Dorsolateral prefrontal cortex (tissue), 120 donors: ENCODE measurements at regions of chr19 and their contacts with region 1.

Region 1: GRCh38 chr19:5048091-5048726 is 79.3 kb downstream of the KDM4B start:
- DNase-seq: peak; percentile 75 to 90 (median 82)
- H3K4me3 ChIP-seq: peak overlapping the region in 8 of 59 donors; percentile 2 to 22 (median 9)
- H3K27ac ChIP-seq: peak overlapping the region in 53 of 59 donors; percentile 7 to 90 (median 70)
- H3K27me3 ChIP-seq: no peaks in the 10 kb centered on the region
- CTCF ChIP-seq: peak; percentile 85 to 99 (median 97)

Region 2: DNA sequence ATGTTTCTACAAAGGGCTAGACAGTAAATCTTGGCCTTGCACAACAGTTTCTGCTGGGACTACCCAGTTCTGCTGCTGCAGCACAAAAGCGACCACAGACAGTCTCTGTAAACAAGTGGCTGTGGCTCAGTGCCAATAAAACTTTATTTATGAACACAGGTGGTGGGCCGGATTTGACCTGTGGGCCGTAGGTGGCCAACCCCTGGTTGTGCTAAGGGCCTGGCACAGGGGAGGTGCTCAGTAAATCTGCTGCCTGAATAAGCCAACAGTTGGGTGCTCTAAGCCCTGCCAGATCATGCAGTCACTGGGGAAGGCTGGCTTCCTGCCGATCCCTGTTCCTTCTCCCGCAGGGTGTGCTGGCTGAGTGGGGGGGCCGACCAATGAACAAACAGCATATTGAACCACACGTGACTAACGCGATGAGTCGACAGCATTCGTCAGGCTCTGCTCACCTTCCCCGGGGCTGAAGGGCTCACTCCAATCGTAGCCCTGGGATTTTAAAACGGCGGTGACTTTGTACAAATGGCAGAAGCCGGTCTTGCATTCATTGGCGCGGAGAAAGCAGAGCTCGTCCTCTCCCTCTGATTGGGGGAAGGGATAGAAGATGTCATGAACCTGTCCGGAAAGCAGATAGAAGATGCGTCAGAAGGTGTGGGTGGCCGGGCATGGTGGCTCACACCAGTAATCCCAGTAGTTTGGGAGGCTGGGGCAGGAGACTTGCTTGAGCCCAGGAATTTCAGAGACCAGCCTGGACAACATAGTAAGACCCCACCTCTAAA is 353.8 kb before region 1 on chr19:
- intact Hi-C with region 1: no loop called
- DNase-seq: peak; percentile 57 to 82 (median 74)
- H3K4me3 ChIP-seq: peak overlapping the region in 3 of 59 donors; percentile 1 to 22 (median 8)
- H3K27ac ChIP-seq: peak overlapping the region in 57 of 59 donors; percentile 32 to 93 (median 75)
- H3K27me3 ChIP-seq: no peaks in the 10 kb centered on the region
- CTCF ChIP-seq: no peak

Region 3: DNA sequence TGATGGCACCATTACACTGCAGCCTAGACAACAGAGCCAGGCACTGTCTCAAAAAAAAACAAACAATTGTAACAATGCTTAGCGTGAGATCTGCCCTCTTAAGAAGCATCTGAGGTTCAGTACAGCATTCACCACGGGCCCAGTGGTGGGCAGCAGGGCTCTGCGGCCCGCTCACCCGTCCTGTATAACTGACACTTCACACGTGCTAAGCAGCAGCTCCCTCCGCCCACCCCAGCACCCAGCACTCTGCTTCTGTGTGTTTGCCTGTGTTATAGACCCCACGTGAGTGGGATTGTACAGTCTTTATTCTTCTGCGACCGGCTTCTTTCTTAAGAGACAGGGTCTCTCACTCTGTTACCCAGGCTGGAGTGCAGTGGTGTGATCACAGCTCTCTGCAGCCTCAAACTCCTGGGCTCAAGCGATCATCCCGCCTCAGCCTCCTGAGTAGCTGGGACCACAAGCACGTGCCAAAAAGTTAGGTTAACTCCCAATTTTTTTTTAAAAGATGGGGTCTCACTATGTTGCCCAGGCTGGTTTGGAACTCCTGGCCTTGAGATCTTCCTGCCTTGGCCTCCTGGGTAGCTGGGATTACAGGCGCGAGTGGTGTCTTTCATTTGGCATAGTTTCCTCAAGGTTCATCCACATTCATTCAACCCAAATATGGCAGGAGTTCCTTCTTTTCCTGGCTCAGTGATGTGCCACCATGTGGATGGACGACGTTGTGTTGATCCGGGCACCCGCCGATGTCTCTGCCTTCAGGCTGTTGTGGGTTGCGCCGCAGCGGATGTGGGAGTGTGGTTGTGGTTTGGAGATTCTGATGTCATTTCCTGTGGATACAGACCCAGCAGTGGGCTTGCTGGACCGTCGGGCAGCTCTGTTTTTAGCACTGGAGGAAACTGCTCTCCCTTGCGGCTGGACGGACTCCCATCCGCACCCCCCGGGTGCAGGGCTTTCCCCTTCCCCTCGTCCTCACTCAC is 90.7 kb after region 1 on chr19:
- intact Hi-C with region 1: loop called (anchors 2 to 5 kb)
- DNase-seq: peak in 4 of 10 donors; percentile 43 to 78 (median 68)
- H3K4me3 ChIP-seq: no peak overlapping the region
- H3K27ac ChIP-seq: peak overlapping the region in 13 of 59 donors; percentile 6 to 87 (median 22)
- H3K27me3 ChIP-seq: no peaks in the 10 kb centered on the region
- CTCF ChIP-seq: peak in 1 of 56 donors; percentile 15

Region 4: DNA sequence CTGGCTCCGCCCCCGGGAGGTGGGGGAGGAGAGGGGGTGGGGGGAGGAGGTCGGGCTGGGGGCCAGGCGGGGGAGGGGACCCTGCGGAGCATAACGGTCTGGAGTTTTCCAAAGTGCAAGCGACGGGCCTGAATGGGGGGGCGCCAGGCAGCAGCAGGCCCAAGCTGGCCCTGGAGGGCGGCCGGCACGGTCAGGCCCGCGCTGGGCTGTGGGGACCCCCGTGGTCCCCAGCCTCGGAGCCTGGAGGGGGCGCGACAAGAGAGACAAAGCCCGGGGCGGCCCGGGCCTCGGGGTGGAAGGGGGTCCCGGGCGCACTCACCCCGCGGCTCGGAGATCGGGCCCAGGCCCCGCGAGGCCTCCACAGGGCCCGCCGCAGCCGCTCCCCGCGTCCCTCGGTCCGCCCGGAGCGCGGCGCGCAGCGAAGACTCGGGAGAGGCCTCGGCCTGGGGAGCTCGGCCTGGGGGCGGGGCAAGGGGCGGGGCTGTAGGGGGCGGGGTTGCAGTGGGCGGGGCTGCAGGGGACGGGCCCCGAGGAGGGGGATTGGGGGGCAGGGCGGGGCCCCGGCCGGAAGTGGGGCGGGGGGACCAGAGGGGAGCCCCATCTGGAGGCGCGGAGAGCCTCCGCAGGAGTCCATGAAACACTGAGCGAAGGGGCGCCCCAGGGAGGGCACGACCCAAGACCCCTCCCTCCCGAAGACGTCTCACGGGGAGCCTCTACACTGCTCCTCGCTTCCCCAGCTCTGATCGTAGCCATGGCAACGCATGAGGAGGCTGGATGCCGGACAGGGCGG is 244.8 kb after region 1 on chr19:
- intact Hi-C with region 1: loop called in 1 of 2 experiments (anchors 5 kb)
- DNase-seq: peak; percentile 52 to 79 (median 62)
- H3K4me3 ChIP-seq: peak overlapping the region; percentile 61 to 92 (median 82)
- H3K27ac ChIP-seq: peak overlapping the region; percentile 58 to 99 (median 93)
- H3K27me3 ChIP-seq: no peaks in the 10 kb centered on the region
- CTCF ChIP-seq: peak in 8 of 56 donors; percentile 4 to 16 (median 8)

Region 5: GRCh38 chr19:5577785-5578493 is 529.7 kb after region 1 on chr19:
- intact Hi-C with region 1: loop called (anchors 2 kb)
- DNase-seq: peak; percentile 41 to 80 (median 66)
- H3K4me3 ChIP-seq: peak overlapping the region in 51 of 59 donors; percentile 11 to 56 (median 38)
- H3K27ac ChIP-seq: peak overlapping the region in 2 of 59 donors; percentile 11 to 53
- H3K27me3 ChIP-seq: no peaks in the 10 kb centered on the region
- CTCF ChIP-seq: peak; percentile 87 to 100 (median 98)